HEK293 (cell line): ENCODE measurements at regions of chr20 and their contacts with region 1.

Region 1: DNA sequence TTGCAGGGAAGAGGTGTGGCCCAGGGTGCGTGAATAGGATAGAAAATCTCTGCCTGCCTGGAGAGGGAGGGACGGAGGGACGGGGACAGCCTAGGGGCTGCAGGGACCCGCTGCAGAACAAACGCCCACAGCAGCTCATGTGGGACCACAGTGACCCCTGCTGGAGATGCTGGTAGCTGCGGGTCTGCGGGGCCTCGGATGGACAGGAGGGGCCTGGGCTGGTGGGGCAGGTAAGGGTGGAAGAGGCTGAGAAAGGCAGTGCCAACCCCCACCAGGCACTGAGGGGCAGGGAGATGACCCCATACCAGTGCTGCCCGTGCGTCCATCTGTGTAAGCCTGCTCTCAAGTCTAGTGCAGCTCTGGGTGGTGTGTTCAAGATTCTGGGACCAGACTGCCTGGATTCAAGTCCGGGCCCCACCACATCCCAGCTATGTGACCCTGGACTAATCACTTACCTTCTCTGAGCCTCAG is 39.4 kb downstream of the KIAA1755 start:
- H3K4me3 ChIP-seq: no peak overlapping the region
- H3K27ac ChIP-seq: no peak overlapping the region
- H3K4me1 ChIP-seq: no peaks in the 10 kb centered on the region
- CTCF ChIP-seq: peak; percentile 93

Region 2: DNA sequence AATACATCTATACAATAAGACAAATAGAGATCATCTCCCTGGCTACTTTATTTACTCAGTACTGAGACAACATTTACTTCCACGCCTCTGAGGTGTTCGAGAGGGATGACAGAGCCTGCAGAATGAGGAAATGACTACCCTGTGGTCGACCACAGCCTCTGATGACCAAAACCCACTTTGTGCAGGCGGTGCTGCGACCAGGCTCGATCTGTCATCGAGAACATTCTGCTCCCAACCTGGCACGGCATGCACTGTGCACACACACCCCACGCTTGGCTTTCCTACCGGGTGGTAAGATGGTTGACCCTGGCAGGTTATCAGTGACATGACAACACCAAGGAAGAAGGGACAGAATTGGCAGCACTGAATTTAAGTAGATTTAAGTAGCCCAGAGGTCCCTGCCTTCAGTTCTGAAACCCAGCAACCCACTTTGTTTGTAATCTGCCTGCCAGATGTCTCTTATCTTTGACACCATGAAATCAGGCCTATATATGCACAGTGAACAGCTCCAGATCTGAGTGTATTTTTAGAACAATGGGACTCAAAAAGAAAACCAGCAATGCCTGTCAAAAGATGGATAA is 230.5 kb before region 1 on chr20:
- CTCF ChIA-PET with region 1: interaction called, 10 read pairs
- POLR2A ChIA-PET with region 1: no interaction called
- H3K4me3 ChIP-seq: no peak overlapping the region
- H3K27ac ChIP-seq: no peak overlapping the region
- H3K4me1 ChIP-seq: no peaks in the 10 kb centered on the region
- CTCF ChIP-seq: no peak

Region 3: DNA sequence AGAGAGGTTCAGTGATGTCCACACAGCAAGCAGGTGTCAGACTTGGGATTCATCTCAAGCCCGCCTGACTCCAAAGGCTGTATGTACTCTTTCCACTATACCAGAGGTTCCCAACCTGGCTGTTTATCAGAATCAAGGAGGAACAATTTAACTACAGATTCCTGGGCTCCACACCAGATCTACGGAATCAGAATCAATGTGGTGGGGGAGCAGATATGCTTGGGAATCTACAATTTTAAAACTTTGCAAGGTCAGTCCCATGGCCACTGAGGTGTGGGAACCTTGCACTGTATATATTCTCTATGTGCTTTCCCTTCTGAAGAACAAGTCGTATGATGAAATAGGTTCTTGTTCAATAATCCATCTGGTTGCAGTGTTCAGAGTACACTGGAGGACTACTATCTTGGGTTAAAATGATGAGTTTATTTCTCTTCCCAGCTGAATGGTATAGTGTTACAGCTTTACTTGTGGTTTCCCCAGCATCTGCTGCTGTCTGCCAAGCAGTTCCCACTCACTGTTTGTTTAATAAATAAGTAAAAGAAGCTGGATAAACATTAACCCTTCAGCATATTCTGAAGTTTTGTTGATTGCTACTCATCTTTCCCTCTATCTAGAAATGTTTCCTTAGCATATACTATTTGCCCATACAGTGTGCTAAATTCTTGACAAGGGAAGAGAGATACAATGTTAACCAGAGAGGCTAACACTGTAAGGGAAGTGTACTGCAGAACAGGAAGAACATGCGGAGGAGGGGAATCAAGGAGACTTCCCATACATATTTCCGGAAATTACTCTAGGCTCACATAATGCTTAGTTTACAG is 197.8 kb before region 1 on chr20:
- CTCF ChIA-PET with region 1: no interaction called
- POLR2A ChIA-PET with region 1: no interaction called
- H3K4me3 ChIP-seq: no peak overlapping the region
- H3K27ac ChIP-seq: no peak overlapping the region
- H3K4me1 ChIP-seq: peaks cover 12% of the 10 kb centered on the region; the same call in 1 of the 2 replicates
- CTCF ChIP-seq: no peak

Region 4: GRCh38 chr20:38073307-38074071 is 147.7 kb before region 1 on chr20:
- CTCF ChIA-PET with region 1: interaction called, 61 read pairs
- POLR2A ChIA-PET with region 1: no interaction called
- H3K4me3 ChIP-seq: no peak overlapping the region
- H3K27ac ChIP-seq: no peak overlapping the region
- H3K4me1 ChIP-seq: peaks cover 7% of the 10 kb centered on the region; the same call in 1 of the 2 replicates
- CTCF ChIP-seq: no peak

Region 5: DNA sequence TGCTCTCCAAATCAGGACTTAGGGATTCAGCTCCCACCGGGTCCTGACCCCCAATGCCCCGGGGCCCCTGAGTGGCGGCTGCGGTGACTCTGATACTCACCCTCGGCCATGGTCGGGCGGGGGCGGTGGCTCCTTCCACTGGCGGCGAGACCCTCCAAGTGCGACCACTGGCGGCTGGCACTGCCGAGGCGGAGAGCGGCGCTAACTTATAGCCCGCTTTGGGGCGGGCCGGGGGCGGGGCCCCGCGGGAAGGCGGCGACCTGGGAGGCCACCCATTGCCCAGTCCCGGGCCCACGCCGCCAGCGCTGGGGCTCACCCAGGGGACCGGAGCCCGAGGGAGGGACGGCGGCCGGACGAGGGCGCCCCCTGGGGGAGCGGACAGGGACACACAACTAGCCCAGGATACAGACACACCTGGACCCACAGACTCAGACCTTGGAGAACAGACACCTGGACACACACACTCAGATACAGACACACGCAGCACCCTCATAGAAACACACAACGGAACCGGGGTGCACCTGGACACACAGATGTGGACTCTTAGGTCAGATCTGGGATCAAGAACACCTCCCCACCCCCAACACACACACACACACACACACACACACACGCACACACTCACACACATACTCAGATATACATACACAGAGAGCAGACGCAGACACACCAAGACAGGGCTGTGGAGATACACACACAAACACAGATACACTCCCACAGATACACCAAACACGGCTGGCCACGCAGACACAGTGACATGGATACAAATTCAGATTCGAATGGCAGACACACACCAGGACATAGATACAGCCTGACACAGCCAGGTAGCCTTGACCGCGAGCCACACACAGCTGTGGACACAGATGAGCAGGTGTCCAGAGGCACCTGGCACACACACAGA is 55.8 kb before region 1 on chr20 and contains the start of gene TGM2:
- CTCF ChIA-PET with region 1: interaction called, 52 read pairs
- POLR2A ChIA-PET with region 1: no interaction called
- H3K4me3 ChIP-seq: peak within 1 kb of the TSS; percentile 32
- H3K27ac ChIP-seq: no peak within 1 kb of the TSS
- H3K4me1 ChIP-seq: no peaks in the 10 kb centered on the region
- CTCF ChIP-seq: peak; percentile 88

Region 6: DNA sequence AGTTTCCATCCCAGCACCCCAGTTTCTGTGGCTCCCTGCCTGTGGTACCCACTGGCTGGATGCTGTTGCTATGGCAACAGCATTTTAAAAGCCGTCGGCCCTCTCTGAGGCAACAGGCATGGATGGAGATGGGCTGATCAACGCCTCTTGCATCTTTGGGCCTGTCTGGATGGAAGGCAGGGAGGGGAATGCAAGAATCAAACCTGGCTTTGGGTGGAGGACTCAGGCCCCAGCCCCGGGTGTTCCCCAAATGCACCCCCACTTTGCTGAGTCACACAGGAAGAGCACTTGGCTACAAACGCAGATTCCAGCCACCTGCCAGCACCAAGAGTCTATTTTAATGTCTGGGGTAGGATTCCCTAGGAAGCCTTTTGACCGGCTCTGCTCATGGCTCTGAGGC is 10.4 kb before region 1 on chr20:
- CTCF ChIA-PET with region 1: interaction called, 32 read pairs
- POLR2A ChIA-PET with region 1: no interaction called
- H3K4me3 ChIP-seq: no peak overlapping the region
- H3K27ac ChIP-seq: no peak overlapping the region
- H3K4me1 ChIP-seq: no peaks in the 10 kb centered on the region
- CTCF ChIP-seq: no peak